Heart right ventricle (tissue), 16 donors: ENCODE measurements at regions of chr2 and their contacts with region 1.

Region 1: DNA sequence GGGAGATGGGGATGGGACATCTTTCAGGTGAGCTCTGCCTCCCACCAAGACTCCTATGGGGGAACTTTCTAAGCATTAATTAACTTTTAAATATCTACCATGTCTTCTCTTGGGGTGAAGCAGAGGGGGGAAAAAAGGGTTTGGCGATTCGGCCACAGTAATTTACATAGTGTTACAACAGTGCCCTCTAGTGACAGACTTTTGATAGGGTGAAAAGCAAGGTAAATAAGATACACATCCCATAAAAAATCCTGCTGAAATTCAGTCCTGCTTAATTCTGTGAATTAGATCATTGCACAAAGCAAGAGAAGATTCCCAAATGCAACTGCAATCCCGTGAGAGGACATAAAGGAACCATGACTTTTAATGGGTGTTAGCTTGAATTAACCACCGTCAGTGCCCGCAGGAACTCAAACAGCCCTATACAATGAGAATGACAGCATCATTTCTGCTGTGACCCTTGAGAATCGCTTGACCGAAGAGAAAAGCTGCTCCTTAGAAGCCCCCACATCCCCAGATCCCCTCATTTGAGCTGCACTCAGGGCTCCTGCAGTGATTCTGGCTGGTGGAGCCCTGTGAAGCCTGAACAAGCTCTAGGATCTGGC is 32.8 kb downstream of the FAM124B start:
- DNase-seq: no peak
- ATAC-seq: no peak
- H3K4me3 ChIP-seq: no peak overlapping the region
- H3K27ac ChIP-seq: no peak overlapping the region
- H3K4me1 ChIP-seq: peaks cover 0 to 5% (median 0%) of the 10 kb centered on the region in 9 donors
- H3K27me3 ChIP-seq: no peaks in the 10 kb centered on the region
- CTCF ChIP-seq: peak; percentile 35 to 79 (median 68)

Region 2: GRCh38 chr2:224302952-224303351 is 66.2 kb before region 1 on chr2:
- intact Hi-C with region 1: no loop called
- DNase-seq: no peak
- ATAC-seq: no peak
- H3K4me3 ChIP-seq: no peak overlapping the region
- H3K27ac ChIP-seq: no peak overlapping the region
- H3K4me1 ChIP-seq: no peaks in the 10 kb centered on the region
- H3K27me3 ChIP-seq: no peaks in the 10 kb centered on the region
- CTCF ChIP-seq: no peak

Region 3: DNA sequence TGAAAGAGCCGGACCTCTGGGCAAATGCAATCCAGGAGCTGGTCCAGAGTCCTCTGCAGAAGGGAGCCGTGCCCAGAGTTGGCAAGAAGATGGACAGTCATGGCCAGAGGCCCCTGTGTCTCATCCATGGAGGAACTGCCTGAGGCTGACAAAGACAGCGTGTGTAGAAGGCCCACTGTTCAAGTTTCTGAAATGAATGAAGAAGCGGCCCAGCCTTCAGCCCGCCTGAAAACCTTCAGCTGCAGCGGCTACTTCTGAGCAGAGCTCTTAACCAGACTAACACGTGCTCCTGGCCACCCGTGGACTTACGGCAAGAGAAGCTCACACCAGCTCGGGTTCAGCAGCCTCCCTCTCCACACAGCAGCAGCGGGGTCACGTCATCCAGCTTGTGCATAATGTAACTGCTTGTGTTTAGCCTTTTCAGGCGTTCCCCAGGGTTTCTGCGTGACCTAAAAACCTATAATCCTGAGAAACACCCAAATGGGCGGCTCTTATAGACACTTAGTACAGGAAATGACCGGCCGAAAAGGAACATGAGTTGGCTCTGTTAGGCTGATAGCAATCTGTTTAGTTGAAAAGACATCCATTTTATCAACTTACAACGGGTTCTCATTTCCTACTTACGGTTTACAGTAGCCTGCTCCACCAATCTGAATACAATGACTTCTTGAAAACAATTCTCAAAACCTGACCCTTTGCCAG is 32.7 kb after region 1 on chr2 and contains the start of gene FAM124B:
- intact Hi-C with region 1: loop called in 1 of 10 experiments (anchors 5 kb)
- DNase-seq: peak; percentile 61 to 74
- ATAC-seq: peak; percentile 83 to 94 (median 92)
- H3K4me3 ChIP-seq: peak within 1 kb of the TSS; percentile 23 to 61 (median 53)
- H3K27ac ChIP-seq: peak within 1 kb of the TSS; percentile 21 to 80 (median 68)
- H3K4me1 ChIP-seq: peaks cover 0 to 45% (median 9%) of the 10 kb centered on the region in 9 donors
- H3K27me3 ChIP-seq: no peaks in the 10 kb centered on the region
- CTCF ChIP-seq: no peak
- total RNA-seq, gene FAM124B: 0.62 to 3.9 (median 1.7) TPM

Region 4: GRCh38 chr2:224442071-224442967 is 73.2 kb after region 1 on chr2:
- intact Hi-C with region 1: loop called in 5 of 10 experiments (anchors 5 to 10 kb)
- DNase-seq: peak in 1 of 2 donors; percentile 33
- ATAC-seq: peak in 5 of 8 donors; percentile 22 to 67 (median 64)
- H3K4me3 ChIP-seq: peak overlapping the region; percentile 41 to 63 (median 58)
- H3K27ac ChIP-seq: peak overlapping the region in 3 of 10 donors; percentile 8 to 64 (median 53)
- H3K4me1 ChIP-seq: peaks cover 0 to 14% (median 9%) of the 10 kb centered on the region in 9 donors
- H3K27me3 ChIP-seq: peaks cover 0 to 22% (median 10%) of the 10 kb centered on the region in 7 donors
- CTCF ChIP-seq: no peak

Region 5: DNA sequence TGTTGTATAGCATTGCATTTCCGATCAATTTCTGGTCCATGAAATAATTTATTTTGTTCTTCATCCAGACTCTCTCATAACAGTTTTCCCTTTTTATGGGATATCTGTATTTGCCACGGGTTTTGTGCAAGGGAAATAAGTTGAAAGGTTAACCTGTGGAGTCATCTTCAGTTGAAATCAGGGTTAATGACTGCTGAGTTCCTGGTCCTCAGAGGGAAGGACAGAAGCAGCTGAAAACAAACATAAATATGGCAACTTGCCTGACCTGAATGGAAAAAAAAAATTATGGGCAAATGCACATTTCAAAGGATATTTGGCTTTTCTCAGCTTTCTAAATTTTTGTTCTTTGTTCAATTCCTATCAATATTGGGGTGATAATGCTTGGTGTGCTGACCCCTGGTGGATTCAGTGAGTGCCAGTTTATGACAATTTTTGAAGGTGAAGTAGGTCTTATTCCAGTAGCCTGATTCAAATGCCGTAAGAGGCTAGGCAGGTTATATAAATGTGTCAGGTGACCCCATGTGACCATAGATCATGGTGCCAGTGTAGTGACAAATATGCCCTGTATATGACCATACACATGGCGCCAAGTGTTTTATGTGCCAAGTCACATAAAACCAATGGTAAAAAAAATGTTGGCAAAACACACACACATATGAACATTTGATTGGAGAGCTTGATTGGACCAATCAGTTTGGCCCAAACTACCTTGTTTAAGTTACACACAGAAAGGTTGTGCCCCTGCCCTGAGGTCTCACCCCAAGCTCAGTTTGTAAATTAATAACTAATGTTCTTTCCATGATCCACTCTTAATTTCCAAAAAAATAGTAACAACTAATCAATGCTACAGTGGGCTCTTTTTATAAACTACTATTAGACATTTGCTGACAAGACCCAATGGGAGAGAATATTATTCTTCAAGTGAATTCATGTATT is 80.3 kb after region 1 on chr2:
- intact Hi-C with region 1: loop called in 5 of 10 experiments (anchors 5 to 10 kb)
- DNase-seq: no peak
- ATAC-seq: no peak
- H3K4me3 ChIP-seq: no peak overlapping the region
- H3K27ac ChIP-seq: no peak overlapping the region
- H3K4me1 ChIP-seq: no peaks in the 10 kb centered on the region
- H3K27me3 ChIP-seq: no peaks in the 10 kb centered on the region
- CTCF ChIP-seq: peak; percentile 20 to 76 (median 60)

Region 6: GRCh38 chr2:224778474-224778877 is 409.3 kb after region 1 on chr2:
- intact Hi-C with region 1: loop called in 1 of 10 experiments (anchors 10 kb)
- DNase-seq: peak in 1 of 2 donors; percentile 21
- ATAC-seq: peak in 1 of 8 donors; percentile 49
- H3K4me3 ChIP-seq: no peak overlapping the region
- H3K27ac ChIP-seq: no peak overlapping the region
- H3K4me1 ChIP-seq: no peaks in the 10 kb centered on the region
- H3K27me3 ChIP-seq: no peaks in the 10 kb centered on the region
- CTCF ChIP-seq: peak; percentile 62 to 87 (median 79)